ENCODE measurements at regions of chr16 and their contacts with region 1.

Region 1: GRCh38 chr16:11255737-11256660 is at the start of gene SOCS1:
- DNase-seq: peak; percentile 95
- H3K4me3 ChIP-seq: peak within 1 kb of the TSS; percentile 79 to 84
- H3K27ac ChIP-seq: peak within 1 kb of the TSS; percentile 86 to 94
- H3K4me1 ChIP-seq: peaks cover 9 to 27% of the 10 kb centered on the region in 2 experiments; a peak in 3 of 4 replicates
- H3K27me3 ChIP-seq: no peaks in the 10 kb centered on the region
- CTCF ChIP-seq: peak; percentile 73
- EP300 ChIP-seq: no peak
- RAD21 ChIP-seq: peak; percentile 73
- polyA plus RNA-seq, gene SOCS1: 6.3 and 8.6 TPM in 2 replicates

Region 2: DNA sequence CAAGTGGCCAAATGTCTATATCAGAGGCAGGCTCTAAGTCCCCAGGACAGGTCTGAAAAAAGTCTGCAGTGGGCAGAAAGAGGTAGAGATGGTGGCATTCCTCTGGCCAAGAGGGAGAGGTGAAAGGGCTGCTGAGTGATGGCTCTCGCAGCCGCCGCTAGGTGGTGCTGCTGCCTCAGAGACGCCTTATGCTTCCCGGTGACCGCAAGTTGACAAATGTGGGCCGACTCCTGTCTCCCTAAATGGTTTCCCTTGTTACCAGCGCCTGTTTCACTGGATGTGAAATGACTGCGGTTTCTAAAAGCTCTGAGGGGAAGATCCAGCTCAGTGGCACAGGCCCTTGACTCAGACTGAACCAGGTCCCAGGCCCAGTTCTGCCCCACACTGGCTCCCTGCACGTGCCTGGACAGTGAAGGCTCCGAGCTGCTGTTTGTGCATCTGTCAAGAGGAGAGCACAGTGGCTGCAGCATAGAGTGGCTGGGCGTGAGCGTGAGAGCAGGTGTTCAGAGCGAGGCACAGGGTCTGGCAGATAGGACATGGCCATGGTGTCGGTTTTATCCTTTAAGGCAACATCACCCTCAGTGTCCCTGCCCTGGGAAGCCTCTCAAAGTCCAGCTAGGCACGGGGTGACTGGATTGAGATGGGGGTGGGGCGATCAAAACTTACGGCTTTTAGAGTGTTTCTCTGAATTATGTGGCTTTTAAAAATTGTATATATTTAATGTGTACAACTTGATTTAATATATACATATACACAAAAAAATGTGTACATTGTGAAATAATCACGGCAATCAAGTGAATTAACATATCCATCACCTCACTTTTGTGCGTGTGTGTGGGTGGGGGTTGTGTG is 291.7 kb before region 1 on chr16:
- CTCF ChIA-PET with region 1: interaction called, 318 read pairs
- POLR2A ChIA-PET with region 1: interaction called, 5 read pairs
- DNase-seq: peak; percentile 79
- H3K4me3 ChIP-seq: peak overlapping the region in 1 of 2 experiments; percentile 30; a peak in 1 of 4 replicates
- H3K27ac ChIP-seq: peak overlapping the region in 1 of 2 experiments; percentile 29; a peak in 1 of 4 replicates
- H3K4me1 ChIP-seq: peaks cover 13 to 25% of the 10 kb centered on the region in 2 experiments
- H3K27me3 ChIP-seq: no peaks in the 10 kb centered on the region
- CTCF ChIP-seq: peak; percentile 92
- EP300 ChIP-seq: no peak
- RAD21 ChIP-seq: peak; percentile 94

Region 3: DNA sequence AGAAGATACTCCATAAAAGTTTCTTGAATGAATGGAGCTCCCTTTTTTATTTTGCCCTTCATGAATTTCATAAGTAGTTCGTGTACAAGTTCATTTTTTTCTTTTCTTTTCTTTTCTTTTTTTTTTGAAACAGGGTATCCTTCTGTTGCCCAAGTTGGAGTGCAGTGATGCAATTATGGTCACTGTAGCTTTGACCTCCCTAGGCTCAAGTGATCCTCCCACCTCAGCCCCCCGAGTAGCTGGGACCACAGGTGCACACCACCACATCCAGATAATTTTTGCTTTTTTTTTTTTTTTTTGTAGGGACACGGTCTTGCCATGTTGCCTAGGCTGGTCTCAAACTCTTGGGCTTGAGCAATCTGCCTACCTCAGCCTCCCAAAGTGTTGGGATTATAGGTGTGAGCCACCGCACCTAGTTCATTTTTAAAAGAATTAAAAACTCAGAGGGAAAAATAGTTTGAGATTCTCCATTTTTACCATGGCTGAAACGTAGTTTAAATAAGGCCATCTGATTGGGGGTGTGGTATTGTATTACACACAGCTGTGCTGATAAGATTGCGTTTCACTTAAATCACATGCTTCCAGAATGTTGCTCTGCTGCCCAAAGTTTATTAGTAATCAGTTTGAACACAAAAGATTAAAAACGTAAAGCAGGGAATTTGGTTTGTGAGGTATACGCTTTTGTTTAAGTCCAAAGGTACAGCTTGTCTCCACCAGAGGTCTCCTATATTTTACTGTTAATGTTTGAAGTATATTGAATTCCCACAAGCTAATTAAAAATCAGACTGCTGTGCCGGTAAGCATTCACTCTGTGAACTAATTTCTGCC is 154.1 kb before region 1 on chr16:
- CTCF ChIA-PET with region 1: interaction called, 13 read pairs
- POLR2A ChIA-PET with region 1: interaction called, 4 read pairs
- DNase-seq: no peak
- H3K4me3 ChIP-seq: no peak overlapping the region
- H3K27ac ChIP-seq: no peak overlapping the region
- H3K4me1 ChIP-seq: peaks cover 30 to 31% of the 10 kb centered on the region in 2 experiments
- H3K27me3 ChIP-seq: no peaks in the 10 kb centered on the region
- CTCF ChIP-seq: peak; percentile 24; the same call in 1 of the 2 replicates
- EP300 ChIP-seq: no peak
- RAD21 ChIP-seq: peak; percentile 40

Region 4: GRCh38 chr16:11240636-11241473 is 15.1 kb before region 1 on chr16:
- CTCF ChIA-PET with region 1: interaction called, 16 read pairs
- POLR2A ChIA-PET with region 1: no interaction called
- DNase-seq: no peak
- H3K4me3 ChIP-seq: no peak overlapping the region
- H3K27ac ChIP-seq: no peak overlapping the region
- H3K4me1 ChIP-seq: no peaks in the 10 kb centered on the region
- H3K27me3 ChIP-seq: no peaks in the 10 kb centered on the region
- CTCF ChIP-seq: no peak
- EP300 ChIP-seq: no peak
- RAD21 ChIP-seq: no peak

Region 5: GRCh38 chr16:11297492-11298142 is 41.6 kb after region 1 on chr16:
- CTCF ChIA-PET with region 1: interaction called, 23 read pairs
- POLR2A ChIA-PET with region 1: interaction called, 3 read pairs
- DNase-seq: peak; percentile 87
- H3K4me3 ChIP-seq: 0 out of 4 replicates have a peak overlapping the region, but pooled peaks of 1 of the 2 experiments have one; percentile 13
- H3K27ac ChIP-seq: peak overlapping the region in 1 of 2 experiments; percentile 86; a peak in 2 of 4 replicates
- H3K4me1 ChIP-seq: peaks cover 0 to 16% of the 10 kb centered on the region in 2 experiments; a peak in 2 of 4 replicates
- H3K27me3 ChIP-seq: no peaks in the 10 kb centered on the region
- CTCF ChIP-seq: no peak
- EP300 ChIP-seq: peak in 1 of 2 experiments; percentile 45; a peak in 1 of 4 replicates
- RAD21 ChIP-seq: peak; percentile 50

Region 6: DNA sequence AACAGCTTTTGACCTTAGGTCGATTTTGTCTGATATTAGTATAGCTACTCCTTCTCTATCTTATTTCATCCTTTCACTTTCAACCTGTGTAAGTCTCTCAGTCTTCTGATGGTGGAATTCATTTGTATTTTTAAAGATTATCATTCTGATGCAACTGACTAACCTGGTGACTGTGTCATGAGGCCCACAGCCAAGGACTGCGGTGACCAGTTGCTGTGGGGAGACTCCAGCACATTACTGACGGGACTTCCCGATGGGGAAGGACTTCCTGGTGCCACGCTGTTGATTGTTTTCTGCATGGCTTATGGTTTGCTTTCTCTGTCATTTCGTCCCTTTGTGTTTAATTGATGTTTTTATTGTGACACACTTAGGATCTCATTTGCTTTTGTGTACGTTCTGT is 123.4 kb after region 1 on chr16:
- CTCF ChIA-PET with region 1: no interaction called
- POLR2A ChIA-PET with region 1: no interaction called
- DNase-seq: no peak
- H3K4me3 ChIP-seq: no peak overlapping the region
- H3K27ac ChIP-seq: no peak overlapping the region
- H3K4me1 ChIP-seq: no peaks in the 10 kb centered on the region
- H3K27me3 ChIP-seq: no peaks in the 10 kb centered on the region
- CTCF ChIP-seq: no peak
- EP300 ChIP-seq: no peak
- RAD21 ChIP-seq: no peak

Measured in SK-N-SH (cell line).